ENCODE measurements at regions of chr9 and their contacts with region 1.

Region 1: DNA sequence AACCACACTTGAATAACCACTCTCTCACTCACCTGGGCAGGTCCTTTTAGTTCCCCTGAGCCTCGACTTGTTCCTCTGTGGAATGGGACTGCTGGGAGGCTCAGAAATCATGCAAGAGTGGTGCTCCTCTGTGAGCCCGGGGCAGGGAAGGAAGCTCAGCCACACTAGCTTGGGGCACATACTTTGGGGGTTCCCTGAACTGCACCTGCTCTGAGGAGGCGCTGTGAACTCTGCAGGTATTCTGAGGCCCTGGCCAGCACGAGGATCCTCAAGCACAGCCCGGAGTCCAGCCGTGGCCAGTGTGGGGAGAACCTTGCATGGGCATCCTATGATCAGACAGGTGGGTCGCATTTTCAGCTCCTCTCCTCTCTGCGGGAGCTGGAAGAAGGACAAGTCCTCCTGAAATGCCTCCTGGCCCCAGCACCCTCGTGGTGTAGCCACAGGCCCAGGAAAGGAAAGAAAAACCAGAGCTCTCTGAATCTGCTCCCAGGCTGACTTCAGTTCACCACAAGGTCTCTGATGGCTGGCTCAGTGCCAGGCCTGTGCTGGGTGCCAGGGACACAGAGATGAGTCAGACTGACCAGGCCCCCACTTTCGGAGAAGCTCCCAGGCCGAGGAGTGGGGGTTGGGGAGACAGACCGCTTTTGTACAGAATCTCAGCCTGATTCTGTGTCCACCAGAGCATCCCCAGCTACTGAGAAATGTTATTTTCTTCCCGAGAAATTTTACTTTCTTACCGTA is 11.9 kb downstream of the GLIPR2 start:
- DNase-seq: peak; percentile 62
- H3K4me3 Mint-ChIP-seq: no peak overlapping the region
- H3K27ac Mint-ChIP-seq: peak overlapping the region; percentile 67
- H3K4me1 Mint-ChIP-seq: peaks cover 92% of the 10 kb centered on the region
- H3K27me3 Mint-ChIP-seq: no peaks in the 10 kb centered on the region

Region 2: GRCh38 chr9:36136272-36136893 is 12.1 kb before region 1 on chr9 and contains the start of gene GLIPR2:
- CTCF ChIA-PET with region 1: interaction called, 37 read pairs
- POLR2A ChIA-PET with region 1: interaction called, 4 read pairs
- DNase-seq: peak; percentile 81
- H3K4me3 Mint-ChIP-seq: peak within 1 kb of the TSS; percentile 85
- H3K27ac Mint-ChIP-seq: peak within 1 kb of the TSS; percentile 86
- H3K4me1 Mint-ChIP-seq: peaks cover 51% of the 10 kb centered on the region
- H3K27me3 Mint-ChIP-seq: peaks cover 20% of the 10 kb centered on the region
- total RNA-seq, gene GLIPR2: 53.9 to 58.4 TPM